Prostate gland (tissue), 2 donors: ENCODE measurements at regions of chr12 and their contacts with region 1.

Region 1: GRCh38 chr12:6383572-6384498 is at the start of gene LTBR:
- DNase-seq: peak; percentile 96
- H3K4me3 ChIP-seq: peak within 1 kb of the TSS; percentile 66 to 81
- H3K27ac ChIP-seq: peak within 1 kb of the TSS; percentile 96
- H3K4me1 ChIP-seq: peaks cover 28% of the 10 kb centered on the region
- H3K27me3 ChIP-seq: no peaks in the 10 kb centered on the region
- CTCF ChIP-seq: peak in 3 of 4 experiments; percentile 7 to 34 (median 32)
- POLR2A ChIP-seq: peak; percentile 89
- total RNA-seq, gene LTBR: 186 to 264 TPM

Region 2: GRCh38 chr12:6335451-6336078 is 48.3 kb before region 1 on chr12:
- intact Hi-C with region 1: loop called (anchors 2 kb)
- DNase-seq: peak; percentile 71
- H3K4me3 ChIP-seq: peak overlapping the region; percentile 22 to 30
- H3K27ac ChIP-seq: peak overlapping the region; percentile 94 to 97
- H3K4me1 ChIP-seq: peaks cover 40% of the 10 kb centered on the region
- H3K27me3 ChIP-seq: no peaks in the 10 kb centered on the region
- CTCF ChIP-seq: peak; percentile 28 to 66 (median 50)
- POLR2A ChIP-seq: no peak

Region 3: GRCh38 chr12:6341417-6342139 is 42.3 kb before region 1 on chr12 and contains the start of gene TNFRSF1A:
- intact Hi-C with region 1: loop called (anchors 1 kb)
- DNase-seq: peak; percentile 81
- H3K4me3 ChIP-seq: peak within 1 kb of the TSS; percentile 62 to 84
- H3K27ac ChIP-seq: peak within 1 kb of the TSS; percentile 94 to 97
- H3K4me1 ChIP-seq: peaks cover 24% of the 10 kb centered on the region
- H3K27me3 ChIP-seq: no peaks in the 10 kb centered on the region
- CTCF ChIP-seq: no peak
- POLR2A ChIP-seq: peak; percentile 82
- total RNA-seq, gene TNFRSF1A: 91.1 to 168 TPM

Region 4: GRCh38 chr12:6423267-6424007 is 39.6 kb after region 1 on chr12:
- intact Hi-C with region 1: no loop called
- DNase-seq: peak; percentile 86
- H3K4me3 ChIP-seq: no peak overlapping the region
- H3K27ac ChIP-seq: no peak overlapping the region
- H3K4me1 ChIP-seq: no peaks in the 10 kb centered on the region
- H3K27me3 ChIP-seq: no peaks in the 10 kb centered on the region
- CTCF ChIP-seq: peak; percentile 80 to 94 (median 92)
- POLR2A ChIP-seq: no peak

Region 5: DNA sequence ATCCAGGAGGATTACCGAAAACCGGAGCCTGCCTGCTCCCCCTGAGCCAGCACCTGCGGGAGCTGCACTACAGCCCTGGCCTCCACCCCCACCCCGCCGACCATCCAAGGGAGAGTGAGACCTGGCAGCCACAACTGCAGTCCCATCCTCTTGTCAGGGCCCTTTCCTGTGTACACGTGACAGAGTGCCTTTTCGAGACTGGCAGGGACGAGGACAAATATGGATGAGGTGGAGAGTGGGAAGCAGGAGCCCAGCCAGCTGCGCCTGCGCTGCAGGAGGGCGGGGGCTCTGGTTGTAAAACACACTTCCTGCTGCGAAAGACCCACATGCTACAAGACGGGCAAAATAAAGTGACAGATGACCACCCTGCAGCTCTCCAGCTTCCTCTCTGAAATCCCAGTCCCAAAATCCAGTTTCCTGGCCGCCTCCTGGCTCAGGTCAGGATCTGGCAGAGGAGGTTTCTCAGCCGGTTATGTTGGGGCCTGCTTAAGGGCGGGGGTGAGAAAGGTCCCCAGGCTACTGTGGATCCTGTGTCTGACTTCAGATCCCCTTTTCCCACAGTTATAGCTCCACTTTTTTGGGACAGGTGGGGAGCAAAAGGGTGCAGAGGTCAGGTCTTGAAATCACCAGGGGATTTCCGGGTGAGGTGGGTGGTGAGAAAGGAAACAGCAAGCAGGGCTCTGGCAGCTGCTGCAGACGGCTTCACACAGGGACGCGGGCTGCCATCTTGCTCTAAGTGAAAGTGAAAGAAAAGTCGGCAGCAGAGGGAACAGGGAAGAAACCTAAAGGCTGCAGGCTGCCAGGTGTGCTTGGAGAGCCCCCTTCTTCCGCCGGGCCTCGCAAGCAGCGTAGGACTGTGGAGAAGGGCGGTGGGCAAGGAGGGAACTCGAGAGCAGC is 67.8 kb after region 1 on chr12 and contains the start of gene TAPBPL:
- intact Hi-C with region 1: loop called (anchors 2 kb)
- DNase-seq: peak; percentile 87
- H3K4me3 ChIP-seq: peak within 1 kb of the TSS; percentile 63
- H3K27ac ChIP-seq: peak within 1 kb of the TSS; percentile 96 to 99
- H3K4me1 ChIP-seq: peaks cover 20% of the 10 kb centered on the region
- H3K27me3 ChIP-seq: no peaks in the 10 kb centered on the region
- CTCF ChIP-seq: peak in 1 of 4 experiments; percentile 2
- POLR2A ChIP-seq: peak; percentile 59
- total RNA-seq, gene TAPBPL: 31.6 to 39.9 TPM